ENCODE measurements at regions of chr19 and their contacts with region 1.

Region 1: DNA sequence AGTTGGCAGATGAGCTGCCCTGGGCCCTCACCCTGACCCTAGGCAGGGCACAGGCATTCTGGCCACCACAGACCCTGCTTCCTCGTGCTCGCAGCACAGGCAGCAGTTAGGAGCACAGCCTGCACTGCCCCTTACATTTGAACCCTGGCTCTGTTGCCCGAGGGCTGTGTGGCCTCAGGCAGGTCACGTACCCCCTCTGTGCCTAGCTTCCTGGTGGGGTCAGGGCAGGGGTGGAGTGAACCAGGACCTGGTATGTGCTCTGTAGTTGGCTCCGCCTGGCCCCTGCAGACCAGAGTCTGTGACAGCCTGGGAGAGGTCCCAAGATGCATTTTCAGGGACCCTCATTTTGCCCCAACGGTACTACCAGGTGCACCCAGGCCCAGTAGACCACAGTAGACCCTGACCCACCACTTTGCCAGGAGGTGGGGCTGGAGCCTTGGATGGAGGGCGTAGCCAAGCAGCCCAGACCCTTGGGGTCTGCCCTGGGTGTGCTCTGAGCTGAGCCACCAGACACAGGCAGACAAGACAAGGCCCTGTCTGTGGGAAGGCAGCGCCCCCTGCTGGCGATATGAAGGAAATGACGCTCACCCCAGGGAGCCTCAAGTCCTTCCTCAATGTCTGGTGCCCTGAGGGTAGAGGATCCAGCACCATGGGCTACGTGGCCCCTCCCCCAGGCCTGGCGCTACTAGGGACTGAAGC is 9.1 kb downstream of the LYL1 start:
- DNase-seq: peak; percentile 92
- H3K4me3 ChIP-seq: no peak overlapping the region; a peak in 1 of 4 replicates
- H3K27ac ChIP-seq: peak overlapping the region; percentile 27 to 99; a peak in 3 of 4 replicates
- H3K4me1 ChIP-seq: peaks cover 19 to 76% of the 10 kb centered on the region in 2 experiments
- H3K27me3 ChIP-seq: no peaks in the 10 kb centered on the region
- CTCF ChIP-seq: peak; percentile 88
- EP300 ChIP-seq: no peak
- RAD21 ChIP-seq: peak; percentile 98

Region 2: GRCh38 chr19:12859546-12859945 is 234.0 kb before region 1 on chr19:
- CTCF ChIA-PET with region 1: no interaction called
- POLR2A ChIA-PET with region 1: no interaction called
- DNase-seq: no peak
- H3K4me3 ChIP-seq: no peak overlapping the region
- H3K27ac ChIP-seq: no peak overlapping the region
- H3K4me1 ChIP-seq: no peaks in the 10 kb centered on the region
- H3K27me3 ChIP-seq: no peaks in the 10 kb centered on the region
- CTCF ChIP-seq: no peak
- EP300 ChIP-seq: no peak
- RAD21 ChIP-seq: no peak

Region 3: GRCh38 chr19:12938234-12939025 is 155.1 kb before region 1 on chr19 and contains the start of gene CALR:
- CTCF ChIA-PET with region 1: interaction called, 10 read pairs
- POLR2A ChIA-PET with region 1: interaction called, 3 read pairs
- DNase-seq: peak; percentile 96
- H3K4me3 ChIP-seq: peak within 1 kb of the TSS; percentile 89 to 97
- H3K27ac ChIP-seq: peak within 1 kb of the TSS; percentile 71 to 83
- H3K4me1 ChIP-seq: peaks cover 19 to 33% of the 10 kb centered on the region in 2 experiments; a peak in 3 of 4 replicates
- H3K27me3 ChIP-seq: no peaks in the 10 kb centered on the region
- CTCF ChIP-seq: peak; percentile 28; the same call in 1 of the 2 replicates
- EP300 ChIP-seq: no peak
- RAD21 ChIP-seq: no peak
- polyA plus RNA-seq, gene CALR: 1,316 and 1,334 TPM in 2 replicates

Region 4: DNA sequence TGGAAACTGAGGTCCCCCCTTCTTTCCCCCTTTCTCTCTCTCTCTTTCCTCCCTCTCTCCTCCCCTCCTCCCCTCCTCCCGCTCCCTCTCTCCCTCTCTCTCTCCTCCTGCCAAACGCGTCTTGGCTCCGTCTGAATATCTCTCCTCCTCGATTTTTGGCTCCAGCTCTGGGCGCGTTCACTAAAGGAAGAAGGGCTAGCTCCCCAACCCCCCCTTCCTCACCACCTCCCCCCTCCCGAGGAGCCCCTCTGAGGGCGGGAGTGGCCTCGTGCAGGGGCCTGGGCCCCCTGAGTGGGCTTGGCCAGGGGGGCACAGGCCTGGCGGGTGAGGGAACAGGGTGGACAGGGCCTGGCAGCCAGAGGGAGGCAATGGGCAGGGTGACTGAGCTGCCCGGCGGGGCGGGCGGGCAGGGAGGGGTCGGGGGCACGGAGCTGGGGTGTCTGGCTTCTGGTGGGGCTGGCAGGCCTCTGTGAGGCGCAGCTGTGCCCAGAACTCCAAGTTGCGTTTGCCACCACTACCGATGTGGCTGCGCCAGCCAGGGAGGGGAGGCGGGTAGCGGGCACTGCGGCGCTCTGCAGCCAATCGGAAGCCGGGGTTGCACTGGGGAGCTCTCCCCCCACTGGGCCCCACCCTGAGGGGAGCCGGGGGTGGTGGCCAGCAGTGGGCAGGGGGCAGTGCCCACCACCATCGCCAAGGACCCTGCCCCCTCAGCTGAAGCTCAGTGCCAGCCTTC is 91.2 kb before region 1 on chr19:
- CTCF ChIA-PET with region 1: interaction called, 26 read pairs
- POLR2A ChIA-PET with region 1: no interaction called
- DNase-seq: peak; percentile 41
- H3K4me3 ChIP-seq: no peak overlapping the region
- H3K27ac ChIP-seq: no peak overlapping the region
- H3K4me1 ChIP-seq: peaks cover 0 to under 1% of the 10 kb centered on the region in 2 experiments; a peak in 1 of 4 replicates
- H3K27me3 ChIP-seq: no peaks in the 10 kb centered on the region
- CTCF ChIP-seq: no peak
- EP300 ChIP-seq: no peak
- RAD21 ChIP-seq: no peak

Region 5: DNA sequence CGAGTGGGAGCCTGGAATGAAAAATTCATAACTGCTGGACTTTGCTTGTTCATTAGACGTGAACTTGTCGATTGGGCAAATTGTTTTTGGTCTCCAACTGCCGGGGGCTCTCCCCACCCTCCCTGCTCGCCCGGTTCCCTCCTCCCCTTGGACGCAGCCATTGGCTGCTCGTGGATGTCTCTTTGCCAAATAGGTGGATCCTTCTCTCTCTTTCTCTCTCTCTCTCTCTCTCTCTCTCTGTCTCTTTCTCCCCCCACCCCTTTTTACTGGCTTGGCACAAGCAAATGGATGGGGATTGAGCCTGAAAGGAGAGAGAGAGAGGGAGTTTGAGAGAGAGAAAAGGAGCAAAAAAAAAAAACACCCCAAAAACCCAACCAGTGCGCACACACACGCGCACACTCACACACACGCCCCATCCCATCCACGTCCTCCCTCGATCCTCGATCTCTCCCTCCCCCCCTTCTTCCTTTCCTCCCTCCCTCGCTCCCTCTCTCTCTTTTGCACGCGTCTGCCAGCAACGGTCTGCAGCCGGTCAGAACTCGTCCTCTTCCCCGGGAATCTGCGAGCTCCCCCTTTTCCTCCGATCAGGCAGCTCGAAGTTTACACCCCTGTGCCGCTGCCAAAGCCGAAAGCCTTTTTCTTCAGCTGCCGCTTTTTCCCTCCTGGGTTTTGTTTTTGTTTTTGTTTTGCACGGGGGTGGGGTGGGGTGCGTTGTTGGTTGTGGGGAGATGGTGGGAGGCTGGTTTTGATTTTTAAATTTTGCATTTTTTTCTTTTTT is 70.5 kb before region 1 on chr19:
- CTCF ChIA-PET with region 1: interaction called, 82 read pairs
- POLR2A ChIA-PET with region 1: interaction called, 3 read pairs
- DNase-seq: peak; percentile 87
- H3K4me3 ChIP-seq: peak overlapping the region; percentile 36 to 67
- H3K27ac ChIP-seq: peak overlapping the region; percentile 82 to 91
- H3K4me1 ChIP-seq: peaks cover 31 to 57% of the 10 kb centered on the region in 2 experiments
- H3K27me3 ChIP-seq: no peaks in the 10 kb centered on the region
- CTCF ChIP-seq: peak; percentile 19; the same call in 1 of the 2 replicates
- EP300 ChIP-seq: peak in 1 of 2 experiments; percentile 22; a peak in 2 of 4 replicates
- RAD21 ChIP-seq: no peak

Region 6: DNA sequence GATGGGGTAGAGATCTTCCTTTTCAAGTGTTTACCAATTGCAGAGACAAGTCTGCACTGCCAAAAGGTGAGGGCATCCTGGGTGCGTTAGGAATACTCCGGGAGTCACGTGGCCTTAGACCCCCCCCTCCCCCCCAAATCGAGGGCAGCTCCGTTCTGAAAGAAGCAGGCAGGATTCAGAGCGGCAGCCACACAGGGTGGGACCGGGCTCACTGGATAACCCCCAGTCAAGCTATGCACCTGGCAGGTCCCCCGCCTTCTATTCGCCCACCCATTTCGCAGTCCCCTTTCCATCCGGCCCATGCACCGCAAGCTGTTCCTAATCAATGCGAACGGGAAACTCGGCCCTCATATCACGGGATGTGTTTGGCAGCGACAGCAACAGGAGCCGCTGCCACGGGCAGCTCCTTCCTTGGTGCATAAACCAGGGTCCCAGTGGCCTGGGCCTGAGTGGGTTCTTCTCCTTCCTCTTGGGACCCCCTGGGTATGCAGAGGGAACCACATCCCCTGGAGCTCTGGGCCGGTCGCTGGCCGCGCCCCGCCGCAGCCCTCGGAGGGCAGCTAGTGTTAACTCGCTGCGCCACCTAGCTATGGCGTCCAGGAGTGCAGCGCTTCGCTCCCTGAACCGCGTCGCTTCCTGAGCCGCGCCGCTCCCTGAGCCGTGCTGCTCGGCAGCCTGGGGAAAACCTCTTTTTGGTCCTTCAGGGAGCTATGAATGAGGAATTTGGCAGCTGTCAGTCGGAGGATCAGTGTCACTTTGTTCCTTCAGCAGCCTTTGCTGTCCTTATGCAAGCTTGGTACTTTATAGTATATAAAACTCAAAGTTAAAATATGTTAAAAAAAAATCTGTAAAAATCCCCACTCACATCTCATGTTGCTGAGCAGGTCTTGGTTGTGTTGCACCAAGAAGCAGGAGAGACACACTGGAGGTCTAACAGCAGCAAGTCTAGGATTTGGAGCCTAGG is 32.3 kb before region 1 on chr19:
- CTCF ChIA-PET with region 1: interaction called, 506 read pairs
- POLR2A ChIA-PET with region 1: interaction called, 6 read pairs
- DNase-seq: peak; percentile 92
- H3K4me3 ChIP-seq: peak overlapping the region; percentile 37 to 58; a peak in 3 of 4 replicates
- H3K27ac ChIP-seq: peak overlapping the region; percentile 52 to 85; a peak in 3 of 4 replicates
- H3K4me1 ChIP-seq: peaks cover 49 to 89% of the 10 kb centered on the region in 2 experiments
- H3K27me3 ChIP-seq: no peaks in the 10 kb centered on the region
- CTCF ChIP-seq: peak; percentile 94
- EP300 ChIP-seq: no peak
- RAD21 ChIP-seq: peak; percentile 91

Region 7: GRCh38 chr19:13150187-13150930 is 56.8 kb after region 1 on chr19 and contains the starts of genes IER2 and STX10:
- CTCF ChIA-PET with region 1: interaction called, 11 read pairs
- POLR2A ChIA-PET with region 1: interaction called, 8 read pairs
- DNase-seq: peak; percentile 92
- H3K4me3 ChIP-seq: peak within 1 kb of the TSS; percentile 83 to 94
- H3K27ac ChIP-seq: peak within 1 kb of the TSS; percentile 95 to 99
- H3K4me1 ChIP-seq: peaks cover 0 to 12% of the 10 kb centered on the region in 2 experiments; a peak in 1 of 4 replicates
- H3K27me3 ChIP-seq: no peaks in the 10 kb centered on the region
- CTCF ChIP-seq: peak; percentile 53
- EP300 ChIP-seq: no peak
- RAD21 ChIP-seq: peak; percentile 53
- polyA plus RNA-seq, gene IER2: 55.7 and 115 TPM in 2 replicates
- polyA plus RNA-seq, gene STX10: 143 and 163 TPM in 2 replicates

Region 8: GRCh38 chr19:13207237-13207845 is 113.8 kb after region 1 on chr19:
- CTCF ChIA-PET with region 1: no interaction called
- POLR2A ChIA-PET with region 1: no interaction called
- DNase-seq: no peak
- H3K4me3 ChIP-seq: no peak overlapping the region
- H3K27ac ChIP-seq: no peak overlapping the region
- H3K4me1 ChIP-seq: no peaks in the 10 kb centered on the region
- H3K27me3 ChIP-seq: no peaks in the 10 kb centered on the region
- CTCF ChIP-seq: no peak
- EP300 ChIP-seq: no peak
- RAD21 ChIP-seq: no peak

Measured in SK-N-SH (cell line).